Activated CD4-positive, alpha-beta T cell treated with anti-CD3 and anti-CD28 coated beads for 36 hours (primary cell): ENCODE measurements at regions of chrX and their contacts with region 1.

Region 1: GRCh38 chrX:153333768-153334645 is at the start of gene ZNF275:
- DNase-seq: peak; percentile 87
- ATAC-seq: peak; percentile 93
- H3K4me3 Mint-ChIP-seq: peak within 1 kb of the TSS; percentile 80
- H3K27ac Mint-ChIP-seq: peak within 1 kb of the TSS; percentile 81
- H3K4me1 Mint-ChIP-seq: peaks cover 45% of the 10 kb centered on the region
- H3K27me3 Mint-ChIP-seq: no peaks in the 10 kb centered on the region
- total RNA-seq, gene ZNF275: 11.5 to 13.4 TPM

Region 2: DNA sequence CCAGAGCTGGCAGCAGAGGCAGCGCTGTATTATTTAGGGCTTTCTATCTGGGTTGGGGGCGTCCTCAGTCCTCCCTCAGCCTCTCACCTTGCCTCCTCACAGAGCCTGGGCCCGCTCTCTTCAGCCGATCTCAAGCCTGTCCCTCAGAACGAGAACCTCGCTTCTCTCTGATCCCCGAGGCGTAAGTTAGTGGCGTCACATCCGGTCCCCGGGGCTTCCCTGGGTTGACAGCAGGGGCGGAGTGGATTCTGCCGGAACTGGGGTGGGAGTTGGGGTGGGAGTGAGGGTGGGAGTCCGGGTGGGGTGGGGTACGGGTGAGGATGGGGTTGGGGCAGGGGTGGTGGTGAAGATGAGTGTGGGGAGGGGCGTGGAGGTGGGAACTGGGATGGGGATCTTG is 1195.6 kb before region 1 on chrX and contains the start of gene MAGEA10:
- CTCF ChIA-PET with region 1: no interaction called
- POLR2A ChIA-PET with region 1: no interaction called
- intact Hi-C with region 1: no loop called
- DNase-seq: no peak
- ATAC-seq: no peak
- H3K4me3 Mint-ChIP-seq: no peak within 1 kb of the TSS
- H3K27ac Mint-ChIP-seq: no peak within 1 kb of the TSS
- H3K4me1 Mint-ChIP-seq: no peaks in the 10 kb centered on the region
- H3K27me3 Mint-ChIP-seq: no peaks in the 10 kb centered on the region
- total RNA-seq, gene MAGEA10: not detected

Region 3: DNA sequence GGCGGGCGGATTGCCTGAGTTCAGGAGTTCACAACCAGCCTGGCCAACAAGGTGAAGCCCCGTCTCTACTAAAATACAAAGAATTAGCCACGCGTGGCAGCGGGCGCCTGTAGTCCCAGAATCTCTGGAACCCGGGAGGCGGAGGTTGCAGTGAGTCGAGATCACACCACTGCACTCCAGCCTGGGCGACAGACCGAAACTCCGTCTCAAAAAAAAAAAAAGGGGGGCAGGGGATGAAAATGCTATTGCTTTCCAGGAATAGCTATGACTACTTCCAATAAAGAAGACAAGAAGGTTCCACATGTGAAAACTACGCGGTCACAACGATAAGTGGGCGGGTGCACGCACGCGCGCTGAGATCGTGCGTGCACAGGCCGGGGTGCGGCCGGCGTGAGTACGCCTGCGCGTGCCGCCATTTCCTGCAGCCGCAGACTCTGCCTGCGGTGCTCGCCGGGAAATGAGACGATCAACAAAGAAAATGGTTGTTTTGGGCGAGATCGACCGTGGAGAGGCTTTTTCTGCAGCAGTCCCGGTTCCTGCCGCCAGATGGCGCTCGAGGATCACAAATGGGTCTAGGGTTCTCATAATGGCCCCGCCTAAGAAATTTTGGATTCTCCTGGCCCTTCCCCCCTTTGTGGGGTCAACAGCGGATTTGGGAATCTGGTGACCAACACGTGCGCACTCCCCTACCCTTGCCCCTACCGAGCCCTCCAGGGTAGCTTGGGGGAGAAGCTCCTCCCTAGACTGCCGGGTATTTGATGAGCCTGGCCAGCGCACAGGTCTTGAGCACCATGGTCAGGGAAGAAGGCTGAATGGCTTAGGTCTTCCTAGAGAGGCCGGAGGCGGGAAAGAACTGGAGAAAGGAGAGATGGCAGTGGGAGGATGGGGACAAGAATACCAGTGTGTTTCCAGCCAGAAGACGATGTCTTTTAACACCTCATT is 375.2 kb before region 1 on chrX:
- CTCF ChIA-PET with region 1: no interaction called
- POLR2A ChIA-PET with region 1: no interaction called
- intact Hi-C with region 1: loop called in 1 of 2 experiments (anchors 2 kb)
- DNase-seq: peak; percentile 91
- ATAC-seq: peak; percentile 98
- H3K4me3 Mint-ChIP-seq: peak overlapping the region; percentile 52
- H3K27ac Mint-ChIP-seq: peak overlapping the region; percentile 91
- H3K4me1 Mint-ChIP-seq: peaks cover 6% of the 10 kb centered on the region
- H3K27me3 Mint-ChIP-seq: no peaks in the 10 kb centered on the region

Region 4: DNA sequence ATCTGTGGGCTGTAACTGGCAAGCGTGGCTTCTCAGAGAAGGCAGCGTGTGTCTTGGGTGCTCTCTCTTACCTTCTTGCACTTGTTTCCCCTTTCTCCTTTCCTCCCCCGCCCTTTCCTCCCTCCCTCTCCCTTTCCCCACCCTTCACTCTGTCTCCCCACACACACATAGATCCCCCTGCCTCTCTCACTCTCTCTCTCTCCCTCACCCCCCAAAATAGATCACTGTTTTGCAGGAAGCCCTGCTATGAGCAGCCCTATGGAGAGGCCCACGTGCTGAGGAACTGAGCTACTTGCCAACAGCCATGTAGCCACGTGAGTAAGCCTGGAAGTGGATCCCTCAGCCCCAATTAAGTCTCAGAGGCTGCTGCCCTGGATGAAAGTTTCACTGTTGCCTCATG is 71.4 kb after region 1 on chrX:
- CTCF ChIA-PET with region 1: no interaction called
- POLR2A ChIA-PET with region 1: no interaction called
- intact Hi-C with region 1: no loop called
- DNase-seq: no peak
- ATAC-seq: no peak
- H3K4me3 Mint-ChIP-seq: no peak overlapping the region
- H3K27ac Mint-ChIP-seq: no peak overlapping the region
- H3K4me1 Mint-ChIP-seq: no peaks in the 10 kb centered on the region
- H3K27me3 Mint-ChIP-seq: no peaks in the 10 kb centered on the region

Region 5: GRCh38 chrX:154082396-154083125 is 748.6 kb after region 1 on chrX:
- CTCF ChIA-PET with region 1: no interaction called
- POLR2A ChIA-PET with region 1: no interaction called
- intact Hi-C with region 1: loop called in 1 of 2 experiments (anchors 10 kb)
- DNase-seq: no peak
- ATAC-seq: peak; percentile 46
- H3K4me3 Mint-ChIP-seq: no peak overlapping the region
- H3K27ac Mint-ChIP-seq: peak overlapping the region; percentile 79
- H3K4me1 Mint-ChIP-seq: peaks cover 37% of the 10 kb centered on the region
- H3K27me3 Mint-ChIP-seq: no peaks in the 10 kb centered on the region